MCF 10A (cell line): ENCODE measurements at regions of chr16 and their contacts with region 1.

Region 1: GRCh38 chr16:21300309-21301167 is 22.4 kb upstream of the CRYM start:
- DNase-seq: peak; percentile 100
- H3K4me3 Mint-ChIP-seq: peak overlapping the region; percentile 94
- H3K27ac Mint-ChIP-seq: peak overlapping the region; percentile 98
- H3K4me1 Mint-ChIP-seq: peaks cover 26% of the 10 kb centered on the region
- H3K27me3 Mint-ChIP-seq: no peaks in the 10 kb centered on the region
- CTCF ChIP-seq: peak; percentile 85

Region 2: DNA sequence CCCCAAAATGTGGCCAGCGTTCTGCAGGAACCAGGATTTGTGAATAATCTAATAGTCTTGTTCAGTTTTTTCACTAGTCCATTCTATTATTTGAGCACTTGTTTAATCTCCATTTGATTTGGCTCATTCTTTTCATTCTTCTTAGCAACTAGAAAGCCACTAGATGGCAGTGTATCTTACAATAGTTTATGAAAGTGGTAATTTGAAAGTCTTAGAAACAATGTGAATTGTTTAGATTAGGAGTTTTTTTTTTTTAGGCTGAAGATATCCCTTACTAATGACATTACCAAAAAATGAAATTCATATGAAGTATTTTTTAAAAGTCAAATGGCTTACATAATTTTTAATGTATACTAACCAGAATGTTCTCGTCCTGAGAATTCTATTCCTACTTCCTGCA is 500.9 kb before region 1 on chr16:
- CTCF ChIA-PET with region 1: interaction called, 13 read pairs
- POLR2A ChIA-PET with region 1: interaction called, 31 read pairs
- intact Hi-C with region 1: loop called (anchors 5 kb)
- DNase-seq: peak; percentile 34
- H3K4me3 Mint-ChIP-seq: no peak overlapping the region
- H3K27ac Mint-ChIP-seq: no peak overlapping the region
- H3K4me1 Mint-ChIP-seq: peaks cover 6% of the 10 kb centered on the region
- H3K27me3 Mint-ChIP-seq: no peaks in the 10 kb centered on the region
- CTCF ChIP-seq: peak; percentile 55

Region 3: DNA sequence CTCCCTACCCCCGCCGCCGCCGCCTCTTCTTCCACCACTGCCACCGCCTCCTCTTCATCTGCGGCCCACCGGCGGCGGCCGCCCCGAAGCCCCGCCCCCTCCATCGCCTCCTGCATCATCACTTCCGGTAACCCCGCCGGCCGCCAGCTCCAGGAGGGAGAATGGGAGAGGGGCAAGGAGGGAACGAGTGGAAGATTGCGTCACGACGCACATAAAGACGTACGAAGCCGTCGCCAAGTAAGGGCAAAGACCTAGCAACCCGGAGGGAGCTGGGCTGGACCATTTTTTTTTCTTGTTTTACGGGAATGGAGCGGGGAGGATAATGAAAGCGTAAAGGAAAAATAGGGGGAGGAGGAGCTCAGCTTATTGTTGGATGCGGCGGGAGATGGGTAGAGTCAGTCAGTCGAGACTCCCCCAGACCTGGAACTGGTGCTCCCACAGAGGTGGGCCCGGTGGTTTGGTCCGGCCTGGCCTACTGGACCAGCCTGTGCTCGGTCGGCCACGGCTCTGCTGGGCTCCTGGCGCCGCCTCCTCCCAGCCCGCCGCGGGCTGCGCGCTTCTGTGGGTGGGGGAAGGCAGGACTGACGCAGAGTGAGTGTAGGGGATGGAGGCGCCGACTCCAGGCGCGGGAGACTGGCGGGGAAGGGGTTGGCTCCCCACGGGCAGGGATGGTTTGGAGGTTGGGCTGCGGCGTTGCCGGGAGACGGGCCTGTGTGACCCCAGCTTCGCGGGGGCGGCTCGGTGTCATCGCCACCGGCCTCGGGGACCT is 400.1 kb before region 1 on chr16 and contains the starts of genes DCUN1D3 and LYRM1:
- CTCF ChIA-PET with region 1: interaction called, 3 read pairs
- POLR2A ChIA-PET with region 1: interaction called, 35 read pairs
- intact Hi-C with region 1: loop called (anchors 5 kb)
- DNase-seq: peak; percentile 99
- H3K4me3 Mint-ChIP-seq: peak within 1 kb of the TSS; percentile 75
- H3K27ac Mint-ChIP-seq: peak within 1 kb of the TSS; percentile 97
- H3K4me1 Mint-ChIP-seq: peaks cover 63% of the 10 kb centered on the region
- H3K27me3 Mint-ChIP-seq: no peaks in the 10 kb centered on the region
- CTCF ChIP-seq: no peak
- total RNA-seq, gene DCUN1D3: 31.0 and 31.7 TPM in 2 replicates
- total RNA-seq, gene LYRM1: 67.3 and 92.8 TPM in 2 replicates

Region 4: GRCh38 chr16:20995711-20996110 is 304.8 kb before region 1 on chr16:
- CTCF ChIA-PET with region 1: no interaction called
- POLR2A ChIA-PET with region 1: no interaction called
- intact Hi-C with region 1: no loop called
- DNase-seq: no peak
- H3K4me3 Mint-ChIP-seq: no peak overlapping the region
- H3K27ac Mint-ChIP-seq: no peak overlapping the region
- H3K4me1 Mint-ChIP-seq: no peaks in the 10 kb centered on the region
- H3K27me3 Mint-ChIP-seq: no peaks in the 10 kb centered on the region
- CTCF ChIP-seq: no peak

Region 5: GRCh38 chr16:21167360-21167759 is 133.2 kb before region 1 on chr16:
- CTCF ChIA-PET with region 1: interaction called, 13 read pairs
- POLR2A ChIA-PET with region 1: interaction called, 13 read pairs
- intact Hi-C with region 1: no loop called
- DNase-seq: peak; percentile 87
- H3K4me3 Mint-ChIP-seq: peak overlapping the region; percentile 28
- H3K27ac Mint-ChIP-seq: peak overlapping the region; percentile 49
- H3K4me1 Mint-ChIP-seq: peaks cover 6% of the 10 kb centered on the region
- H3K27me3 Mint-ChIP-seq: no peaks in the 10 kb centered on the region
- CTCF ChIP-seq: no peak

Region 6: GRCh38 chr16:21190599-21190998 is 109.9 kb before region 1 on chr16:
- CTCF ChIA-PET with region 1: interaction called, 87 read pairs
- POLR2A ChIA-PET with region 1: interaction called, 89 read pairs
- intact Hi-C with region 1: loop called (anchors 1 kb)
- DNase-seq: no peak
- H3K4me3 Mint-ChIP-seq: no peak overlapping the region
- H3K27ac Mint-ChIP-seq: no peak overlapping the region
- H3K4me1 Mint-ChIP-seq: no peaks in the 10 kb centered on the region
- H3K27me3 Mint-ChIP-seq: peaks cover 14% of the 10 kb centered on the region
- CTCF ChIP-seq: no peak

Region 7: DNA sequence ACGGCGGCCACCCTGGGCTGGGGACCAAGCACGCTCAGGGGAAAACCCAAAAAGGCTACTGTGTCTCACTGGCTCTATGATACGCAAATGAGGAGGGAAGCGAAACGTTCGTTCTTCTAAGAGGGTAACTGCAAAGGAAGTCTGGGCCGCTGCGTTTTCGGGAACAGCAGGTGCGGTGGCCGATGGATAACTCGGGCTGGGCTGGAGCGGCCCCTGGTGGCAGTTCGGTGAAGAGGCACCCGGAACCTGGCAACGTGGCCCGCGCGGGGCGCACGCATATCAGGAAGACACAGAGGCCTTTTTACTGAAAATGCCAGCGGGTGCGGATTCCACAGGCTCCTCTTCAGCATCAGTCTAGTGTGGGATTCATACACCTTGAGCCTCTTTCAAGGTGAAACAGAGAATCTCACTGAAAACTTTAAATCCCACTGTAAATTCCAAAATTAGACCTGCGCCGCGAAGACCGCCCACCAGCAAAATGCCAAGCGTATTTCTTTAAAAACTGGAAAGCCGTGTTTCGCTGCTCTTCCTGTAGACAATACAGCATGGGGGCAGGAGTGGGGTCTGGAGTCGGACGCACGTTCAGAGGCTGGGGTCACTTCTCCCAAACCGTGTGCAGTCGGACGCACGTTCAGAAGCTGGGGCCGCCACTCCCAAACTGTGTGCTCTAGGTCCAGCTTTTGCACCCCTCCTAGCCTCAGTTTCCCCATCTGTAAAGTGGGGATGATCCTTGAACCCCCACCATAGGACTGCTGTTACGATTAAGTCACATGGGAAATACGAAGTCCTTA is 254.5 kb after region 1 on chr16:
- CTCF ChIA-PET with region 1: interaction called, 6 read pairs
- POLR2A ChIA-PET with region 1: no interaction called
- intact Hi-C with region 1: loop called (anchors 5 kb)
- DNase-seq: peak; percentile 84
- H3K4me3 Mint-ChIP-seq: peak overlapping the region; percentile 40
- H3K27ac Mint-ChIP-seq: no peak overlapping the region
- H3K4me1 Mint-ChIP-seq: peaks cover 8% of the 10 kb centered on the region
- H3K27me3 Mint-ChIP-seq: no peaks in the 10 kb centered on the region
- CTCF ChIP-seq: peak; percentile 100